ENCODE measurements at regions of chr1 and their contacts with region 1.

Region 1: GRCh38 chr1:56584910-56585528 is 5.7 kb upstream of the PLPP3 start:
- DNase-seq: peak; percentile 66
- ATAC-seq: 0 out of 3 replicates have a peak, but pooled peaks have one; percentile 27
- H3K4me3 ChIP-seq: no peak overlapping the region
- H3K27ac ChIP-seq: no peak overlapping the region
- H3K4me1 ChIP-seq: peaks cover 38% of the 10 kb centered on the region
- H3K27me3 ChIP-seq: no peaks in the 10 kb centered on the region
- CTCF ChIP-seq: peak; percentile 81
- EP300 ChIP-seq: no peak
- POLR2A ChIP-seq: no peak
- RAD21 ChIP-seq: peak; percentile 87

Region 2: DNA sequence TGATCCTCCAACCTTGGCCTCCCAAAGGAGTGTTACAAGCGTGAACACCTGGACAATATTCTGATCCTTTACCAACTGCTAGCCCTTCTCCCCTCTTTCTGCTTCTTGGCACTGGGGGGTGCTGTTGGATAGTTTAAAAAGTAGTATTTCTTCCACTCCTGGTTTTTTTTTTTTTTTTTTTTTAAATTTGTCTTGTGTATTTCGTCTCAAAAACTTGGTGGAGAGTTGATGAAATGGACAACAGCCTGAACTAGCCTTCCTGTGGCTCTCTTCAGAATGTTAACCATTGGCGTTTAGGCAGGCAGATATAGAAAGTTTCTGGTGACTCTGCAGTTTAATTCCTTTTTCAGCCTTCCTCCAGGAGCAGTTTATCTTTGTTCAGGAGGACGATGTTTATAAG is 1300.2 kb before region 1 on chr1:
- CTCF ChIA-PET with region 1: interaction called, 3 read pairs
- POLR2A ChIA-PET with region 1: no interaction called
- in situ Hi-C with region 1: loop called (anchors 10 kb)
- intact Hi-C with region 1: loop called (anchors 2 kb)
- DNase-seq: no peak
- ATAC-seq: peak; percentile 57; the same call in 2 of the 3 replicates
- H3K4me3 ChIP-seq: no peak overlapping the region
- H3K27ac ChIP-seq: no peak overlapping the region
- H3K4me1 ChIP-seq: peaks cover 7% of the 10 kb centered on the region; the same call in 1 of the 2 replicates
- H3K27me3 ChIP-seq: no peaks in the 10 kb centered on the region; a peak in 1 of 5 replicates
- CTCF ChIP-seq: peak; percentile 64
- EP300 ChIP-seq: no peak
- POLR2A ChIP-seq: no peak
- RAD21 ChIP-seq: 0 out of 2 replicates have a peak, but pooled peaks have one; percentile 37

Region 3: DNA sequence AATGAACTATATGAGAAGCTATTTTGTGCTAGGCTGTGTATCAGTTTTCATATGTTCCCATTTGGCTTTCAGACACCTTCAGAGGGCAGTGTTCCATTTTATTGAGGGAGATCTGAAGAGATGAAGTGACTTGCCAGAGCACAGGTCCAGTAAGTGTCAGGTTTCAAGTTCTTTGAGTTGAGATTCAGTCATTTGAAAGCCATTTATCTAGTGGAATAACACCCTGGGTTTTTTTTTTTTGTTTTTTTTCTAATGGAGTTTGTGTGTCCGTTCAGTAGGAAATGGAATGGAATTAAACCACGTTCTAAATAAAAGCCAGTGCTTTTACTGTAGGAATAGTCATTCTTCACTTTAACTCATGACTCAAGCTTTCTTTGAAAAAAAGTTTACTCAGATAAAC is 717.0 kb before region 1 on chr1:
- CTCF ChIA-PET with region 1: no interaction called
- POLR2A ChIA-PET with region 1: no interaction called
- in situ Hi-C with region 1: loop called (anchors 25 kb)
- intact Hi-C with region 1: loop called (anchors 10 kb)
- DNase-seq: peak; percentile 3
- ATAC-seq: no peak
- H3K4me3 ChIP-seq: no peak overlapping the region
- H3K27ac ChIP-seq: no peak overlapping the region
- H3K4me1 ChIP-seq: no peaks in the 10 kb centered on the region
- H3K27me3 ChIP-seq: 0 out of 5 replicates have a peak, but pooled peaks cover 0 to 4% of the 10 kb centered on the region in 2 experiments
- CTCF ChIP-seq: peak; percentile 9; the same call in 1 of the 2 replicates
- EP300 ChIP-seq: no peak
- POLR2A ChIP-seq: no peak
- RAD21 ChIP-seq: no peak

Region 4: GRCh38 chr1:56235909-56236510 is 349.0 kb before region 1 on chr1:
- CTCF ChIA-PET with region 1: no interaction called
- POLR2A ChIA-PET with region 1: no interaction called
- in situ Hi-C with region 1: loop called (anchors 10 kb)
- intact Hi-C with region 1: no loop called
- DNase-seq: peak; percentile 78
- ATAC-seq: peak; percentile 91
- H3K4me3 ChIP-seq: no peak overlapping the region
- H3K27ac ChIP-seq: no peak overlapping the region
- H3K4me1 ChIP-seq: peaks cover 19% of the 10 kb centered on the region
- H3K27me3 ChIP-seq: no peaks in the 10 kb centered on the region
- CTCF ChIP-seq: peak; percentile 64
- EP300 ChIP-seq: peak in 1 of 2 experiments; percentile 25; a peak in 1 of 4 replicates
- POLR2A ChIP-seq: no peak
- RAD21 ChIP-seq: no peak

Region 5: GRCh38 chr1:56726706-56727105 is 141.7 kb after region 1 on chr1:
- CTCF ChIA-PET with region 1: no interaction called
- POLR2A ChIA-PET with region 1: no interaction called
- in situ Hi-C with region 1: no loop called
- intact Hi-C with region 1: no loop called
- DNase-seq: no peak
- ATAC-seq: no peak
- H3K4me3 ChIP-seq: no peak overlapping the region
- H3K27ac ChIP-seq: no peak overlapping the region
- H3K4me1 ChIP-seq: no peaks in the 10 kb centered on the region
- H3K27me3 ChIP-seq: no peaks in the 10 kb centered on the region
- CTCF ChIP-seq: no peak
- EP300 ChIP-seq: no peak
- POLR2A ChIP-seq: no peak
- RAD21 ChIP-seq: no peak

Region 6: DNA sequence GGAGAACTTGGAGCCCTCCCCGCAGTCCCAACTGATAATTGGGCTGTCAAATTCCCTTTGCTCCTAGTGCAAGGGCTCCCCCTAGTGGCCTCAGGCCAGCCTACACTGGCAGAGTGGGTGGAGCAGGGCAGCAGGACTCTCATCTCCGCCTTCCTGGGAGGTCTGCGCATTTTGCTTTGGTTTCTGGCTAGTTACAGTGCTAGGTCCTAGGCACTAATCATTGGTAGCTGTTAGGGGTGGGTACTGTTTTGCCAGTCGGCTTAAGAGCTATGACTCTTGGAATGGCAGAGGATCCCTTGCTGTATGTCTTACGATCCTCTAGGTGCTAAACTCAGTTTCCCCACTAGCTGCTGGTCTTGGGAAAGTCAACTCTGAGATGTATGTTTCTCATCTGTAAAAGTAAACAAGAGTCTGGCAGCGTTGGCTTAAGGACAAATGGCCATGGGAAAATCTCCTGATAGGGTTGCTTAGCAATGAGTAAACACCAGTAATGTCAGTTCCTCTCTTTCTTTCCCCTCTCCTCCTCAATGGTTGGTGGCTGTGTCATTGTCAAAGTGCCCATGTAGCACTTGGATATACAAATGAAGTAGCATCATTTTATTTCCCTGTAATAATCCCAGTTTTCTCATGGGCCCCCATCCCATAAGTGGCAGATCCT is 236.2 kb after region 1 on chr1:
- CTCF ChIA-PET with region 1: no interaction called
- POLR2A ChIA-PET with region 1: interaction called, 3 read pairs
- in situ Hi-C with region 1: no loop called
- intact Hi-C with region 1: loop called (anchors 5 kb)
- DNase-seq: peak; percentile 73
- ATAC-seq: peak; percentile 63
- H3K4me3 ChIP-seq: peak overlapping the region in 1 of 3 experiments; percentile 32; a peak in 2 of 6 replicates
- H3K27ac ChIP-seq: peak overlapping the region; percentile 52
- H3K4me1 ChIP-seq: peaks cover 67% of the 10 kb centered on the region
- H3K27me3 ChIP-seq: no peaks in the 10 kb centered on the region
- CTCF ChIP-seq: peak; percentile 97
- EP300 ChIP-seq: no peak
- POLR2A ChIP-seq: no peak
- RAD21 ChIP-seq: peak; percentile 94